ENCODE measurements at regions of chr17 and their contacts with region 1.

Region 1: GRCh38 chr17:82913295-82914042 is 73.6 kb upstream of the ZNF750 start:
- DNase-seq: no peak
- ATAC-seq: peak; percentile 62
- H3K4me3 ChIP-seq: no peak overlapping the region
- H3K27ac ChIP-seq: no peak overlapping the region
- H3K4me1 ChIP-seq: no peaks in the 10 kb centered on the region
- H3K27me3 ChIP-seq: no peaks in the 10 kb centered on the region
- CTCF ChIP-seq: peak; percentile 43 to 93 (median 46)
- POLR2A ChIP-seq: no peak
- RAD21 ChIP-seq: peak; percentile 90

Region 2: GRCh38 chr17:82781894-82782274 is 131.6 kb before region 1 on chr17:
- CTCF ChIA-PET with region 1: interaction called, 26 read pairs
- POLR2A ChIA-PET with region 1: interaction called, 3 read pairs
- RAD21 ChIA-PET with region 1: interaction called, 6 read pairs
- intact Hi-C with region 1: loop called (anchors 1 kb)
- DNase-seq: peak; percentile 36
- ATAC-seq: peak; percentile 98
- H3K4me3 ChIP-seq: no peak overlapping the region
- H3K27ac ChIP-seq: no peak overlapping the region
- H3K4me1 ChIP-seq: no peaks in the 10 kb centered on the region
- H3K27me3 ChIP-seq: no peaks in the 10 kb centered on the region
- CTCF ChIP-seq: peak; percentile 99
- POLR2A ChIP-seq: no peak
- RAD21 ChIP-seq: peak; percentile 100

Measured in HCT116 (cell line).